ENCODE measurements at regions of chr17 and their contacts with region 1.

Region 1: GRCh38 chr17:2416010-2416734 is 15.3 kb upstream of the MNT start:
- DNase-seq: peak; percentile 89
- ATAC-seq: peak; percentile 84
- H3K4me3 ChIP-seq: no peak overlapping the region
- H3K4me3 Mint-ChIP-seq: no peak overlapping the region
- H3K27ac ChIP-seq: no peak overlapping the region
- H3K27ac Mint-ChIP-seq: peak overlapping the region; percentile 46
- H3K4me1 ChIP-seq: no peaks in the 10 kb centered on the region
- H3K4me1 Mint-ChIP-seq: peaks cover 1% of the 10 kb centered on the region
- H3K27me3 ChIP-seq: no peaks in the 10 kb centered on the region
- H3K27me3 Mint-ChIP-seq: no peaks in the 10 kb centered on the region
- CTCF ChIP-seq: peak; percentile 99

Region 2: DNA sequence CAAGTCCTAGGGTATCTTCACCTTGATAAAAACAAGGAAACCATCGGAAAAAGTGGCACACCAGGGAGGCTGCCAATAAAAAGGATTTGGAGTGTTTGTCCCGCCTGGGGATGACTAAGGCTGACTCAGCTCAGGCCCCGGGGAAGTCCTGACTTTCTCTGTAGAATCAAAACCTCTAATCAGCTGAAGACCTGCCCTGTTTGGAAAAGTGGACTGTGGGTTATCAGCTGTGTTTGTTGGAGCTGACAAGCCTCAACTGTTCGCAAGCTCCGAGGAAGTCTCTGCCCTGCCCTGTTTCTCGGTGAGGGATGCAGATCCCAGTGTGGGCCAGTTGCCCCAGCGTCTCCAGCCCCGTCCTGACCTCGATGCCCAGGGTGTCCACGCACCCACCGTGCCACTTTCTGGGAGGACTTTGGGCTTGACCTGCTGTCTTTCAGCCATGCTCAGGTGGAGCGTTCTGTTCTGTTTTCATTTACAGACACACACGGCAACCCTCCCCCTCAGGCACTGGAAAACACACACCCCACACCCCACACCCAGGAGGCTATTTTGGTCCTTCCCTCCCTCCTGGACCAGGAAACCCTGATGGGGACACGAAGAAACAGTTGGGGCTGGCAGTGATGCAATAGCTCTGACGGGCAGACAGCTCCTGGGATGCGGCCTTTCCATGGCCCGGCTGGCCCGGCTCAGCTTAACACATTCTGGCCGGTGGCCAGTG is 826.0 kb before region 1 on chr17:
- CTCF ChIA-PET with region 1: no interaction called
- POLR2A ChIA-PET with region 1: no interaction called
- intact Hi-C with region 1: no loop called
- DNase-seq: no peak
- ATAC-seq: no peak
- H3K4me3 ChIP-seq: no peak overlapping the region
- H3K4me3 Mint-ChIP-seq: no peak overlapping the region
- H3K27ac ChIP-seq: no peak overlapping the region
- H3K27ac Mint-ChIP-seq: peak overlapping the region; percentile 74
- H3K4me1 ChIP-seq: peaks cover 24 to 35% of the 10 kb centered on the region in 2 donors
- H3K4me1 Mint-ChIP-seq: peaks cover 27% of the 10 kb centered on the region
- H3K27me3 ChIP-seq: no peaks in the 10 kb centered on the region
- H3K27me3 Mint-ChIP-seq: no peaks in the 10 kb centered on the region
- CTCF ChIP-seq: no peak

Region 3: DNA sequence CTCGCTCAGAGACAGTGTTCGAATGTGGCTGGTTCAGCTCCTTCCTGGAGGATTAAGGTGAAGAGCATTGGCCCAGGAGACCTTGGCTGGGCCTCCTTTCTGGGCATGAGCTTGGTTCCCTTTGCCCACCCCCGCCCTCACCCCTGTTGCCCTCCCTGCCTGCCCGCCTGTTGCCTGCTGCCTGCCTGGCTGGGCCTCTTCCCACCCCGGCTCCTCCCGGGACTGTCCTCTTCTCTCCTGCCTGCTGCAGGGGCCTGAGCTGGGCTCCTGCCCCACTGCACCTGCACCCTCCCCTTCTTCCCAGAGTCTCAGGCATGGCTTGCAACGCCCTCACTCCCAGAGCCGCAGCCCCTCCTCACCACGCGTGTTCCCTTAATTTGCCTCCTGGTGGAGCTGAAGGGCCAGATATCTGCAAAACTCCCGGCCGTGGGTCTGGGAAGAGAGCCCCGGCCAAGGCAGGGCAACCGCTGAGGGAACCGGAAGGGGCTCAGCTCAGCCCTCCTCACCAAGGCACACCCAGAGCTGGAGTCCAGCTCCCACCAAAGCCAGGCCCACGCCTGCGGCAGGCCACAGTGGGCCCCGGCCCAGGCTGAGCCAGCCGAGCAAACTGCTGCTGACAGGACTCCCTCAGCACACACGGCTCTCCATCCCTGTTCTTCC is 46.5 kb before region 1 on chr17:
- CTCF ChIA-PET with region 1: interaction called, 11 read pairs
- POLR2A ChIA-PET with region 1: no interaction called
- intact Hi-C with region 1: no loop called
- DNase-seq: no peak
- ATAC-seq: no peak
- H3K4me3 ChIP-seq: no peak overlapping the region
- H3K4me3 Mint-ChIP-seq: no peak overlapping the region
- H3K27ac ChIP-seq: no peak overlapping the region
- H3K27ac Mint-ChIP-seq: no peak overlapping the region
- H3K4me1 ChIP-seq: no peaks in the 10 kb centered on the region
- H3K4me1 Mint-ChIP-seq: no peaks in the 10 kb centered on the region
- H3K27me3 ChIP-seq: no peaks in the 10 kb centered on the region
- H3K27me3 Mint-ChIP-seq: no peaks in the 10 kb centered on the region
- CTCF ChIP-seq: no peak

Region 4: GRCh38 chr17:2392252-2393173 is 23.7 kb before region 1 on chr17:
- CTCF ChIA-PET with region 1: interaction called, 650 read pairs
- POLR2A ChIA-PET with region 1: no interaction called
- intact Hi-C with region 1: no loop called
- DNase-seq: peak; percentile 98
- ATAC-seq: peak; percentile 70
- H3K4me3 ChIP-seq: peak overlapping the region; percentile 35 to 98 (median 85)
- H3K4me3 Mint-ChIP-seq: peak overlapping the region; percentile 97
- H3K27ac ChIP-seq: peak overlapping the region; percentile 97 to 99
- H3K27ac Mint-ChIP-seq: peak overlapping the region; percentile 96
- H3K4me1 ChIP-seq: peaks cover 44 to 58% of the 10 kb centered on the region in 2 donors
- H3K4me1 Mint-ChIP-seq: peaks cover 58% of the 10 kb centered on the region
- H3K27me3 ChIP-seq: no peaks in the 10 kb centered on the region
- H3K27me3 Mint-ChIP-seq: no peaks in the 10 kb centered on the region
- CTCF ChIP-seq: no peak

Region 5: DNA sequence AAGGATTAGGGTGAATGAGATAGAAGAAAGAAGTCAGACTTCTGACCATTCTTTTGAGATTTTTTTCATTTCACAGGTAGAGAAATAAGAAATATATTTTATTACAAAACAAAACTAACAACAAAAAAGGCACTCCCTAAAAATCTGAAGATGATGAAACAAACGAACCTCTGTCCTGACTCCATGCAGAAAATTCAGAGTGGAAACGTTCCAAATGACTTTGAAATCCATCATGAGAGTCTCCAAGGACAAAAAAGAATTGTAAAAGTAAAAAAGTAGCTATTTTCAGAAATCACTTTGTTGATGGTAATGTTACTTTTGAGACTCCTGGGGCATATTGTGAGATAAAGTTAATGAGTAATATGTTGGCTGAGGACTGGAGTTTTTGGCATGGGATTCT is 11.0 kb after region 1 on chr17:
- CTCF ChIA-PET with region 1: interaction called, 11 read pairs
- POLR2A ChIA-PET with region 1: no interaction called
- intact Hi-C with region 1: no loop called
- DNase-seq: no peak
- ATAC-seq: no peak
- H3K4me3 ChIP-seq: no peak overlapping the region
- H3K4me3 Mint-ChIP-seq: no peak overlapping the region
- H3K27ac ChIP-seq: no peak overlapping the region
- H3K27ac Mint-ChIP-seq: no peak overlapping the region
- H3K4me1 ChIP-seq: no peaks in the 10 kb centered on the region
- H3K4me1 Mint-ChIP-seq: no peaks in the 10 kb centered on the region
- H3K27me3 ChIP-seq: no peaks in the 10 kb centered on the region
- H3K27me3 Mint-ChIP-seq: no peaks in the 10 kb centered on the region
- CTCF ChIP-seq: no peak

Region 6: DNA sequence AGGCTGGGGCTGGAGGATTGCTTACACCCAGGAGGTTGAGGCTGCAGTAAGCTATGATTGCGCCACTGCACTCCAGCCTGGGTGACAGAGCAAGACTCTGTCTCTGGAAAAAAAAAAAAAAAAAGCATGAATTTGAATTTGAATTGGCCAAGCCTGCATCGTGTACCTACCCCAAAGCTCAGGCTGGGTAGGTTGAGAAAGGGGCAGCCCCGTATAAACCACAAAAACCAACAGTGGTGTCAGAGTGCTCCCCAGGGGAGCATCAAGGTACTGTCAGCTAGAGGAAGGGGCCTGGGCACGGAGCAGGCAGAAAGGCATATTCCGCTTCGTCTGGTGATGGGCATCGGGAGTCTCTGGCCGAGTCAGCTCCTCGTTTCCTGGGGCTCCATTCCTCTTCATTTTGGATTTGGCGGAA is 421.0 kb after region 1 on chr17:
- CTCF ChIA-PET with region 1: interaction called, 12 read pairs
- POLR2A ChIA-PET with region 1: no interaction called
- intact Hi-C with region 1: no loop called
- DNase-seq: peak; percentile 88
- ATAC-seq: peak; percentile 100
- H3K4me3 ChIP-seq: no peak overlapping the region
- H3K4me3 Mint-ChIP-seq: no peak overlapping the region
- H3K27ac ChIP-seq: no peak overlapping the region
- H3K27ac Mint-ChIP-seq: peak overlapping the region; percentile 68
- H3K4me1 ChIP-seq: peaks cover 8 to 9% of the 10 kb centered on the region in 2 donors
- H3K4me1 Mint-ChIP-seq: peaks cover 14% of the 10 kb centered on the region
- H3K27me3 ChIP-seq: peaks cover 0 to 41% (median 14%) of the 10 kb centered on the region in 4 experiments
- H3K27me3 Mint-ChIP-seq: peaks cover 25% of the 10 kb centered on the region
- CTCF ChIP-seq: peak; percentile 70

Measured in B cell (primary cell).